MCF 10A (cell line): ENCODE measurements at regions of chr14 and their contacts with region 1.

Region 1: GRCh38 chr14:23095196-23096108 is at the start of gene C14orf119:
- DNase-seq: peak; percentile 100
- H3K4me3 Mint-ChIP-seq: no peak within 1 kb of the TSS
- H3K27ac Mint-ChIP-seq: no peak within 1 kb of the TSS
- H3K4me1 Mint-ChIP-seq: peaks cover 25% of the 10 kb centered on the region
- H3K27me3 Mint-ChIP-seq: no peaks in the 10 kb centered on the region
- CTCF ChIP-seq: no peak
- total RNA-seq, gene C14orf119: 39.6 and 54.8 TPM in 2 replicates

Region 2: DNA sequence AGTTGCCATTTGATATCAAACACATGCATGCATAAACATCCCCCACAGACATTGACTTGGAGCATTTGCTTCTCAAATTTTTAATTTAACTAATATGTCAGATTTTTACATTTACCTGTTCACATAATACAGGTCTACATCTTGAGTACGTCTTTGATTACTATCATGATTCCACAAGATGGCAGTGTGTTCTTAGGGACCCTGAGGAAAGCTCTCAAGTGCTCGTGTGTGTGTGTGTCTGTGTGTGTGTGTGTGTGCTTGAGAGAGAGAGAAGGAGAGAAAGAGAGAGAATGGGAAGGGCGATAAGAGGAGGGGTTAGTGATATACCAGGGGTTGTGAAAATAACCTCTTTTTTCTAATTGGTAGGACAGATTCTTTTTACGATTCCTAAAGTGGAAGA is 1254.7 kb before region 1 on chr14:
- CTCF ChIA-PET with region 1: no interaction called
- POLR2A ChIA-PET with region 1: no interaction called
- intact Hi-C with region 1: no loop called
- DNase-seq: peak; percentile 7
- H3K4me3 Mint-ChIP-seq: no peak overlapping the region
- H3K27ac Mint-ChIP-seq: no peak overlapping the region
- H3K4me1 Mint-ChIP-seq: no peaks in the 10 kb centered on the region
- H3K27me3 Mint-ChIP-seq: peaks cover 81% of the 10 kb centered on the region
- CTCF ChIP-seq: peak; percentile 8

Region 3: DNA sequence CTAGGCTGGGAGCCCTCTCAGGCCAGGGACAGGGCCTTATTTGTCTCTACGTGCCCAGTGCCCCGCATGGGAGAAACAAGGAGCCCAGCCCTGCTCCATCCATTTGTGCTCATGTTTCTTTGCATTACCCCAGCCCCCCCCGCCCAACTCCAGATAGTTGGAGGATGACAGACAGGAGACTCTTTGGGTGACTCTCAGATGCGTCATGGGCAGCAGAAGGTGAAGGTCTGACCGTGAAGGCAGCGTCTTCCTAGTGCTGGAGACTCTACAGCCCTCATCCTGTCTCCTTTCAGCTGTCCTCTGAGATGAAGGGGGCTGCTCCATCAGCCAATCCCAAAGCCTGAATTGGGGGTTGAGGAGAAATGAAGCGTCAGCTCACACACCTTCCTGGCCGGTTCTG is 53.7 kb before region 1 on chr14:
- CTCF ChIA-PET with region 1: no interaction called
- POLR2A ChIA-PET with region 1: no interaction called
- intact Hi-C with region 1: no loop called
- DNase-seq: no peak
- H3K4me3 Mint-ChIP-seq: no peak overlapping the region
- H3K27ac Mint-ChIP-seq: no peak overlapping the region
- H3K4me1 Mint-ChIP-seq: no peaks in the 10 kb centered on the region
- H3K27me3 Mint-ChIP-seq: no peaks in the 10 kb centered on the region
- CTCF ChIP-seq: no peak

Region 4: DNA sequence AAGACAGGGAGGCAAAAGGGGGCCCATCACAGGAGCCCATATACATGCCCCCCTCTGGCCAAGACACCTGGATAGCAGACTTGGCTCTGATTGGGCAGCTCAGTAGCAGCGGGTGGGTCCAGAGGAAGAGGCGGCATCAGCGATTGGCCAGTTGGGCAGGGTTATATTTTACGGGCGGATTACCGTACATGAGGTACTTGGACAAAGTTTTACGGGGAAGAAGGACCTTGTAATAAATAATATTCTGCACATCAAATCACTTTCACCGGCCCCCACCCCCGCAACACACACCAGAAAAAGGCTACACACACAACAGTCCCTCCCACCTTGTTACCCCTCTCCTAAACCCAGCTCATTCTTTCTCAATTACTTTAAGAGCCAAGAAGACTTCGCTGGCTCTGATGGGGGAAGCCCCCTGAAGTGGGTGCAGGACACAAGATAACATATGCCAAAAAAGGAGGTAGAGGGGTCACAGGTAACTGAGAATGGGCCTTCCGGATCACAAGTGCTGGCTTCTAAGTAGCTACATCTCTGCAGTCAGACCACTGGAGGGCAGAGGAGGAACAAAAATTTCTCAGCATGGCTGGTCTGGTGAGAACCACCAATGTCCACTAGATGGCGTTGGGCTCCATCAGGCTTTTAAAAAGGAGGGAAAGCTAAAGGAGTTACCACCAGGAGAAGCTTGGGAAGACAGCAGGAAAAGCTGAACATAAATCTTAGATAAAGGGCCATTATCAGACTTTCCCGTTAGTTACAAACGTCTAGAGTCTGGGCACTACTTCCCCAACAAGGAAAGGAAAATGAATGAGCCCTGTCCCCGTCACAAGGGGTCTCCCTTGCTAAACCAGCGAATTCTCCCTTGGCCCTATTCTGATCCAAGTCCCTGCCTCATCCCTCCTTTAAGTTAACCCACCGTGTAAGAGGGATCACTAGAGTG is 26.7 kb before region 1 on chr14:
- CTCF ChIA-PET with region 1: interaction called, 27 read pairs
- POLR2A ChIA-PET with region 1: interaction called, 66 read pairs
- intact Hi-C with region 1: no loop called
- DNase-seq: peak; percentile 93
- H3K4me3 Mint-ChIP-seq: peak overlapping the region; percentile 50
- H3K27ac Mint-ChIP-seq: no peak overlapping the region
- H3K4me1 Mint-ChIP-seq: peaks cover 26% of the 10 kb centered on the region
- H3K27me3 Mint-ChIP-seq: no peaks in the 10 kb centered on the region
- CTCF ChIP-seq: peak; percentile 94

Region 5: DNA sequence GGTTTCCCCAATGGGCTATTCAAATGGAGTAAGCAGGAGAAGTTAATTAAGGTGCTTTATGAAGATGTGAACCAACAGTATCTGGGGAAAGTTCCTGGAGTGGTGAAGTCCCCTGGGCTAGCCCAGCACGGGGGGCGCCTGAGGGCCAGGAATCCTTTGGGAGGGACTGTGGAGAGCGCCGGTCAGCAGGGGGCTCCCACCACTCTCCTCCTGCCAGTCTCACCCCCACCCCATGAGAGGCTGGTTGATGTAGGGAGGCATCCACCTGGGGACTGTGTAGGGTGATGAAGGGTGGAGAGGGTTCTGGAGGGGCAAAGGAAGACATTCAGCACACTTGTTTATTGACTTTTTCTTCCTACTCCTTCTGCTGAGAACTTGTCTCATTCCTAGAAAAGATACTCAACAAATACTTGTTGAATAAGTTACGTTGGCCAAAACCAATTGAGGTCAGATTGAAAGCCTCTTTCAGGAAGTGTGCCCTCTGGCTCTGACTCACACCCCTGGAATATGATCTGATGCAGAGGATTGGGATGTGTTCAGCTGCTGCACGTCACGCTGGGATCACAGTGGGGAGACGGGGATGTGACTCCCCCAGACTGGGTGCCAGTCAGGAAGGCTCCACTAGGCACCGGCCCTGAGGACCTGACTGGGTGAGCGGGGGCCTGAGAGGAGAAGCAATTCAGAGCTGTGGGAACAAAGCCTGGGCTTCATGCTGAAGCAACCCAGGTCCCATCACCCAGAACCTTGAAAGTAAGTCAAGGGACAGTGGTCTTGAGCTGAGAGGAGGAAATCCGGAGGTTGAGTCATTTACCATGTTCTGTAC is 19.4 kb after region 1 on chr14:
- CTCF ChIA-PET with region 1: interaction called, 11 read pairs
- POLR2A ChIA-PET with region 1: interaction called, 10 read pairs
- intact Hi-C with region 1: no loop called
- DNase-seq: peak; percentile 87
- H3K4me3 Mint-ChIP-seq: no peak overlapping the region
- H3K27ac Mint-ChIP-seq: peak overlapping the region; percentile 77
- H3K4me1 Mint-ChIP-seq: peaks cover 16% of the 10 kb centered on the region
- H3K27me3 Mint-ChIP-seq: no peaks in the 10 kb centered on the region
- CTCF ChIP-seq: no peak

Region 6: GRCh38 chr14:23154964-23155587 is 59.6 kb after region 1 on chr14:
- CTCF ChIA-PET with region 1: no interaction called
- POLR2A ChIA-PET with region 1: interaction called, 8 read pairs
- intact Hi-C with region 1: loop called (anchors 2 kb)
- DNase-seq: peak; percentile 64
- H3K4me3 Mint-ChIP-seq: peak overlapping the region; percentile 52
- H3K27ac Mint-ChIP-seq: peak overlapping the region; percentile 49
- H3K4me1 Mint-ChIP-seq: peaks cover 37% of the 10 kb centered on the region
- H3K27me3 Mint-ChIP-seq: no peaks in the 10 kb centered on the region
- CTCF ChIP-seq: no peak

Region 7: DNA sequence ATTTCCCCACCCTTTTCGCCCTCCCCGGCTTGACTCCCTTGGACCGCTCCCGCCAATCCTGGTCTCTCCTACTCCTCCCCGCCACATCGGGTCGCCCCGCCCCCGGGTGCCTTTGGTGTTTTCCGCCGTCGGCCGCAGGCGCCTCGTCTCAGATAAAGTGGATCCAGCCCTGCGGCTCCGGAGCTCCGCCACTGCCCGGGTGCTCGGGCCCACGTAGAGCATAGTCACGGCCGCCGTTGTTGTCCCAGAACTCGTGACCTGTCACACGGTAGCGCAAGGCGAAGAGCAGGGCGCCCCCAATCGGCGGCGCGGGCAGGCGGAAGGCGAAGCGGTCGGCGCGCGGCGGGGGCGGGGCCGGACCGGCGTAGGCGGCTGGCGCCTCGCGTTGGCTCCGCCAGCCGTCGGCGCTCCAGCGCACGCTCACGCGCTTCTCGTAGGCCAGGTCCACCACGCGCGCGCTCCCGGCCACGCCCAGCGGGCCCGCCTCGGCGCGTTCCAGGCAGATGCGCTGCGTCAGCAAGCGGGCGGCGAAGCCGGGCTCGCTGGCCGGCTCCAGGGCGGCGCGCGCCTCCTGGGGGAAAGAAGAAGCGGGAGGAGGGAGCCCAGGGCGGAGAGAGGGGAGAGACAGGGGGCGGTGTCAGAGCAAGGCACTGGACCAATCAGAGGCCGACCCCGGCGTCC is 206.0 kb after region 1 on chr14:
- CTCF ChIA-PET with region 1: interaction called, 3 read pairs
- POLR2A ChIA-PET with region 1: interaction called, 38 read pairs
- intact Hi-C with region 1: no loop called
- DNase-seq: peak; percentile 97
- H3K4me3 Mint-ChIP-seq: peak overlapping the region; percentile 95
- H3K27ac Mint-ChIP-seq: peak overlapping the region; percentile 97
- H3K4me1 Mint-ChIP-seq: peaks cover 25% of the 10 kb centered on the region
- H3K27me3 Mint-ChIP-seq: no peaks in the 10 kb centered on the region
- CTCF ChIP-seq: peak; percentile 79